Left cardiac atrium (tissue), 4 donors: ENCODE measurements at regions of chr6 and their contacts with region 1.

Region 1: GRCh38 chr6:111210194-111210728 is 123.0 kb downstream of the SLC16A10 start:
- DNase-seq: no peak
- ATAC-seq: peak in 1 of 2 donors; percentile 57

Region 2: GRCh38 chr6:111011360-111012142 is 198.7 kb before region 1 on chr6:
- intact Hi-C with region 1: loop called in 1 of 2 experiments (anchors 5 kb)
- DNase-seq: no peak
- ATAC-seq: peak; percentile 61 to 75

Region 3: DNA sequence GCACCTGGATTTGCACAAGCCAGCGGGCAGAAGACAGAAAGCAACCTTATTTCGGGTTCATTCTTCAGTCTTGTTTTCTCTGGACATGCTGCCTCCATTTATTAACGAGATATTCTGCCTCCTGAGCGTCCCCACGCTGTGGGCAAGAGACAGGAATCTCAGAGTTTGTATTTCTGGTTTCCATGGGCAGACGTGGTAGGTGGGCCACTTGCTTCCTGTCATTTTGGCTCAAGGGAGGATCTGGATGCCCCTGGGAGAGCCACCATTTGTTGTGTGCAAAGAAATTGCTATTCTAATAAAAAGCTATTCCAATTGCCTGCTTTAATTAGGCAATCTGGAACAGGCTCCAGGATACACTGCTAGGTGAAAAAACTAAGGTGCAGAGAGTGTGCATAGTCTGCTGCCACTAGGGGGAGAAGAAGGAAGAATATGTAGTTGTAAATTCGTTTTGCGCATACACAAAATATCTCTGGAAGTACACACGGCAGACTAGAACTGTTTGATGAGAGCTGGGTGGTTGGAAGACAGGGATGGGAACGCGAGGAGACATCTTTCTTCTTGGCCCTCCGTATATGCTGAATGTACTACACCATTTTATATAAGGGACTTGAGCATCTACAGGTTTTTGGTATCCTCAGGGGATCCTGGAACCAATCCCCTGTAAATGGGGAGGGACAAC is 153.0 kb before region 1 on chr6:
- intact Hi-C with region 1: loop called (anchors 2 to 10 kb)
- DNase-seq: no peak
- ATAC-seq: peak; percentile 44 to 76

Region 4: GRCh38 chr6:111087106-111087835 is 123.0 kb before region 1 on chr6 and contains the start of gene SLC16A10:
- intact Hi-C with region 1: loop called in 1 of 2 experiments (anchors 10 kb)
- DNase-seq: peak; percentile 68
- ATAC-seq: peak; percentile 93 to 96
- total RNA-seq, gene SLC16A10: 4.8 to 9.5 TPM